GM18951 (cell line): ENCODE measurements at regions of chr17 and their contacts with region 1.

Region 1: DNA sequence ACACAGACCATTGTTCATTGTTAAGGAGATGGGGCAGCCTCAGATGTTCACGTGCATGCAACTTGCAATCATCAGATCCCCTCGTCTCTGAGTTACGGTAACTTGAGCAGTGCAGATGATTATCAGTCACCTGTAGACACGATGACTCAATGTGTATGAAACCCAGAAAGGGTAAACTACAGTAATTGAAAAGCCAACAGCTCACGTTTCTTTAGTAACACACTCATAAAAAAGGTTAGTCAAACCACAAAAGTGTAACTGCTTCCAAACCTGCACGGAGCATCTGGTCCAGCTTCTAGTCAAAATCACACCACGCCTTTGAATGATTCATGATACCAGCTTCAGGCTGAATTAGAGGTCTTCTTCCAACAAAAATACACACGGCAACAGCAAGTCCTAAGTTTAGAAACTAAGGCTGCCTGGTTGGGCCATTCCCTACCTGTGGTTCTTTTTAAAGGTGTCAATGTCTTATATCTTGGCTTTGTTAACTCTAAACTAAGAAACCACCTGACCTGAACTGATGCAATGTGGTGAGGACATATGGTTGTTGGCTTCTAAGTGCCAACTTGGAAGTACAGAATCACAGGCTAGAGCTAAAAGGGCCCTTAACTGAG is 32.3 kb downstream of the GRB7 start:
- POLR2A ChIP-seq: peak; percentile 5

Region 2: GRCh38 chr17:39863918-39864746 is 94.1 kb after region 1 on chr17 and contains the start of gene IKZF3:
- in situ Hi-C with region 1: loop called (anchors 5 kb)
- POLR2A ChIP-seq: peak; percentile 77

Region 3: DNA sequence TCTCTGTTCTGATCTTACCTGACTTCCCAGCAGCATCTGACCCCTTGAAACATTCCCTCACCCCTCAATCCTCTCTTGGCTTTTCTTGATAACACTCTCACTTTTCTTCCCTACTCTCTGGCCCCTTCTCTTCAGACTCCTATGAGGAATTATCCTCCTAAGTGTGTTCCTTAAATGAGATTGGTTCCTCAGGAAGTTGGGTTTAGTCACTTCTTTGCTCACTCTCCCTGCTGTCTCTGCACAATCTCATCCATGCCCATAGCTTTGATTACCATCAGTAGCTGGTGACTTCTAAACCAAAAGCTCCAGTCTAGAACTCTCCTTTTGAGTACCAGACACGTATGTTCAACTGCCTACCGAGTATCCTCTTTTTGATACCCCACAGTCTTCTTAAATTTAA is 271.1 kb after region 1 on chr17:
- in situ Hi-C with region 1: no loop called
- POLR2A ChIP-seq: no peak